IMR-90 (cell line): ENCODE measurements at regions of chr17 and their contacts with region 1.

Region 1: DNA sequence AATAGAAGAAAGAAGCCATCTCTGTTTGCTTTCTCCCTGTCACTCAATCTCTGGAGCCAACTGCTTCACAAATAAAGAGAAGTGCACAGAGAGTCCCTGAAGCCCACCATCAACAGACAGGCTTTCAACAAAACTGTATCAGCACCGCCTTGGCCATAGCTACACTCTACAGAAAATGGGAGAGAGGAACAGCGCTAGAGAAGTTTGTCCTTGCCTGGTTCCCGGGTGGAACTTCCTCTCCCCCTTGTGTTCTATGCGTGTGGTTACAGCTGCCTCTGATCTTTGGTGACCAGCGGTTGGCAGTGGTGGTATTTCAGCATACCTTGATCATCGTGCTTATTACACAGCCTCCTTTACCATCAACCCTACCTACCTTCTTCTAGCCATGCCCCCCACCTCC is 91.4 kb upstream of the CCL2 start:
- DNase-seq: peak; percentile 16
- ATAC-seq: peak; percentile 83
- H3K4me3 ChIP-seq: no peak overlapping the region
- H3K27ac ChIP-seq: no peak overlapping the region
- H3K4me1 ChIP-seq: no peaks in the 10 kb centered on the region; the same call in none of the 2 replicates
- H3K27me3 ChIP-seq: peaks cover 27% of the 10 kb centered on the region
- CTCF ChIP-seq: peak; percentile 44
- POLR2A ChIP-seq: no peak
- RAD21 ChIP-seq: peak; percentile 46

Region 2: GRCh38 chr17:33779225-33779591 is 384.4 kb before region 1 on chr17:
- CTCF ChIA-PET with region 1: interaction called, 4 read pairs
- POLR2A ChIA-PET with region 1: no interaction called
- dilution Hi-C with region 1: no loop called
- in situ Hi-C with region 1: no loop called
- intact Hi-C with region 1: loop called (anchors 1 kb)
- DNase-seq: peak; percentile 69
- ATAC-seq: peak; percentile 97
- H3K4me3 ChIP-seq: no peak overlapping the region
- H3K27ac ChIP-seq: no peak overlapping the region
- H3K4me1 ChIP-seq: no peaks in the 10 kb centered on the region
- H3K27me3 ChIP-seq: peaks cover 2% of the 10 kb centered on the region; the same call in 1 of the 2 replicates
- CTCF ChIP-seq: peak; percentile 89
- POLR2A ChIP-seq: no peak
- RAD21 ChIP-seq: peak; percentile 54

Region 3: DNA sequence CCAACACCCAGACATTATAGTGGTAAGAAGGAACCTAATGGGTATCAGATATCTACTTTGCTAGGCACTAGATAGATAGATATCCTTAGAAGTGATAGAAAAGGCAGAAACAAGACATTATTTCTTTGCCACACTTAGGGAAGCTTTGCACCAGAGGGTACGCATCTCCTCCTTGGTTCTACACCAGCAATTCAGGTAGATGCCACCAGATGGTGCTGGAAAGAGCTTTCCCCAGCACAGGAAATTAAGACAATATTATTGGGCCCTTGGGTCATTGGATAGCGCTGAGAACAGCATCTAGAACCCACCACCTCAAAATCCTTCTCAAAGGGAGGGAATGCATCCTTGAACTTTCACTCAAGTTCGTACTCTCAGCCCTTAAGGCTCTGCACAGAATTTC is 82.4 kb before region 1 on chr17:
- CTCF ChIA-PET with region 1: no interaction called
- POLR2A ChIA-PET with region 1: no interaction called
- dilution Hi-C with region 1: no loop called
- in situ Hi-C with region 1: no loop called
- intact Hi-C with region 1: loop called (anchors 10 kb)
- DNase-seq: peak; percentile 6
- ATAC-seq: peak; percentile 68
- H3K4me3 ChIP-seq: no peak overlapping the region
- H3K27ac ChIP-seq: no peak overlapping the region
- H3K4me1 ChIP-seq: no peaks in the 10 kb centered on the region
- H3K27me3 ChIP-seq: no peaks in the 10 kb centered on the region
- CTCF ChIP-seq: peak; percentile 41
- POLR2A ChIP-seq: no peak
- RAD21 ChIP-seq: no peak

Region 4: DNA sequence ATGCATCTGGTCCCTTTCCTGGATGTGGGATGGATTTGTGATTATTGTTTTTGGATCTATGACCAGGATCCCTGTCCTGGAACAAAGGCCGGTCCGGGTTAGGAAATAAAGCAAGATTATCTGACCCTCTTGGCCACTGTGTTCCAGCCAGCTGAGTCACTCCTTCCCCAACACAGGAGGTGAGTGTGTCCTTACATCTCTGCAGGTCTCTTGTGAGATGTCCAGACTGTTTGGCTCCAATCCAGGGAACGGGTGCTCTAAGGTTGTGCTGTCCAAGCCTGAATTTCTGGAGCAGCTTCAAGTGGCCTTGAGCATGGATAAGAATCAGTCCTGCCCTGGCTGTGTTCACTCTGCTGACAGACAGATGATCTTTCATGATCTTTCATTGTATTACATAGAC is 45.1 kb before region 1 on chr17:
- CTCF ChIA-PET with region 1: no interaction called
- POLR2A ChIA-PET with region 1: no interaction called
- dilution Hi-C with region 1: no loop called
- in situ Hi-C with region 1: no loop called
- intact Hi-C with region 1: no loop called
- DNase-seq: no peak
- ATAC-seq: no peak
- H3K4me3 ChIP-seq: no peak overlapping the region
- H3K27ac ChIP-seq: no peak overlapping the region
- H3K4me1 ChIP-seq: no peaks in the 10 kb centered on the region
- H3K27me3 ChIP-seq: no peaks in the 10 kb centered on the region
- CTCF ChIP-seq: no peak
- POLR2A ChIP-seq: no peak
- RAD21 ChIP-seq: no peak

Region 5: GRCh38 chr17:34133350-34133749 is 30.3 kb before region 1 on chr17:
- CTCF ChIA-PET with region 1: no interaction called
- POLR2A ChIA-PET with region 1: no interaction called
- dilution Hi-C with region 1: no loop called
- in situ Hi-C with region 1: no loop called
- intact Hi-C with region 1: no loop called
- DNase-seq: no peak
- ATAC-seq: no peak
- H3K4me3 ChIP-seq: no peak overlapping the region
- H3K27ac ChIP-seq: no peak overlapping the region
- H3K4me1 ChIP-seq: no peaks in the 10 kb centered on the region
- H3K27me3 ChIP-seq: peaks cover 1% of the 10 kb centered on the region; the same call in 1 of the 2 replicates
- CTCF ChIP-seq: no peak
- POLR2A ChIP-seq: no peak
- RAD21 ChIP-seq: no peak

Region 6: GRCh38 chr17:34143430-34143829 is 20.2 kb before region 1 on chr17:
- CTCF ChIA-PET with region 1: no interaction called
- POLR2A ChIA-PET with region 1: no interaction called
- dilution Hi-C with region 1: no loop called
- in situ Hi-C with region 1: no loop called
- intact Hi-C with region 1: loop called (anchors 2 kb)
- DNase-seq: no peak
- ATAC-seq: no peak
- H3K4me3 ChIP-seq: no peak overlapping the region
- H3K27ac ChIP-seq: no peak overlapping the region
- H3K4me1 ChIP-seq: no peaks in the 10 kb centered on the region
- H3K27me3 ChIP-seq: peaks cover 3% of the 10 kb centered on the region; the same call in 1 of the 2 replicates
- CTCF ChIP-seq: no peak
- POLR2A ChIP-seq: no peak
- RAD21 ChIP-seq: no peak